PC-9 (cell line): ENCODE measurements at regions of chr15 and their contacts with region 1.

Region 1: DNA sequence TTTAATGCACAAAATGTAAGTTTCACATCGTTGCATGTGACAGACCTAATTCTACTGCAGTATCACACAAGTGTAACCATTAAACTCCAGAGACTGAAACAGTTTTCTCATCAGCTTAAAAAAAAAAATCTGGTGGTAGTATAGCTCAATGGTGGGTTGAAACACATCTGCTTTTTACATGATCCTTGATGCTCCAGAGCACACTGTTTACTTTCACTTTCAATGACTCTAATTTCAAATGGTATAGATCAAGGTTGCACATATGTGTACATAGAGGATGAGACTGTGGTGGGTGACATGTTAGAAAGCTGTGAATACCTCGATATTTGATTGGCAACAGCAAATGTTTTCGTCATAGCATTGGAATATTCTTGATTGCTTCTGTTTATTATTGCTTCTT is 22.4 kb downstream of the MCTP2 start:
- DNase-seq: no peak
- H3K4me3 ChIP-seq: no peak overlapping the region
- H3K27ac ChIP-seq: no peak overlapping the region
- H3K4me1 ChIP-seq: no peaks in the 10 kb centered on the region
- H3K27me3 ChIP-seq: no peaks in the 10 kb centered on the region
- CTCF ChIP-seq: no peak

Region 2: DNA sequence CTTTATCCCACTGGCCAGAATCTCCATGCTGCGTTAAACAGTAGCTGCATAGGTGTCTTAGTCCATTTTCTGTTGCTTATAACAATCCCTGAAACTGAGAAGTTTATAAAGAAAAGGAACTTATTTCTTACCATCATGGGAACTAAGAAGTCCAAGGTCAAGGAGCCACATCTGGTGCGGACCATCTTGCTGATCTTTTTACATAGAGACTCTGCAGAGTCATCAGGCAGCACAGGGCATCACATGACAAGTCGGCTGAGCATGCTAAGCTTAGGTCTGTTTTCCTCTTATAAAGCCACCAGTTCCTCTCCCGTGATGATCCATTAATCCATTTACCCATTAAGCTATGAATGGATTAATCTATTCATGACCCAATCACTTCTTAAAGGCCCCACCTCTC is 1575.7 kb before region 1 on chr15:
- CTCF ChIA-PET with region 1: no interaction called
- POLR2A ChIA-PET with region 1: no interaction called
- intact Hi-C with region 1: no loop called
- DNase-seq: no peak
- H3K4me3 ChIP-seq: no peak overlapping the region
- H3K27ac ChIP-seq: no peak overlapping the region
- H3K4me1 ChIP-seq: peaks cover 13% of the 10 kb centered on the region
- H3K27me3 ChIP-seq: no peaks in the 10 kb centered on the region
- CTCF ChIP-seq: no peak

Region 3: GRCh38 chr15:94317201-94317600 is 63.5 kb after region 1 on chr15:
- CTCF ChIA-PET with region 1: no interaction called
- POLR2A ChIA-PET with region 1: interaction called, 16 read pairs
- intact Hi-C with region 1: no loop called
- DNase-seq: no peak
- H3K4me3 ChIP-seq: no peak overlapping the region
- H3K27ac ChIP-seq: no peak overlapping the region
- H3K4me1 ChIP-seq: no peaks in the 10 kb centered on the region
- H3K27me3 ChIP-seq: no peaks in the 10 kb centered on the region
- CTCF ChIP-seq: no peak